SK-N-SH (cell line): ENCODE measurements at regions of chr21 and their contacts with region 1.

Region 1: DNA sequence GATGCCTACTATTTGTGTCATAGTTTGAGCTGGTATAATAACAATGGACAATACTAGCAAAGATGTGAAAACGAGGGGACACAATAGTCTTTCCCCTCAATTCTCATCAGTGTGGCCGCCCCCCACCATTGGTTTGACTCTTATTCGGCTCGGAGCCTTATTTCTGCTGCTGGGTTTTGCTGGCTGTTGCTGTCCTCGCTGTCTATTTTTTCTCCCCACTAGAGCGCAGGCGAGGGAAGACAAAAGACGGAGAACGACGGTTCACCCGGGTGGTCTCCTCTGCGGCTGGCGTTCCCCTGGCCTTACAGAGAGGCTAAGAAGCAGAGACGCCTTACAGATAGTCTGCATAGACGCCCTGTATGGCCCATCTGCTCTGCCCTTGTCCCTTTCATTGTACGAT is 19.4 kb downstream of the CLIC6 start:
- DNase-seq: peak; percentile 70
- H3K4me3 ChIP-seq: no peak overlapping the region
- H3K27ac ChIP-seq: no peak overlapping the region
- H3K4me1 ChIP-seq: no peaks in the 10 kb centered on the region; a peak in 1 of 4 replicates
- H3K27me3 ChIP-seq: peaks cover 38% of the 10 kb centered on the region; the same call in 1 of the 2 replicates
- CTCF ChIP-seq: peak; percentile 77
- EP300 ChIP-seq: no peak
- RAD21 ChIP-seq: peak; percentile 61

Region 2: GRCh38 chr21:33510826-33511225 is 1177.3 kb before region 1 on chr21:
- CTCF ChIA-PET with region 1: no interaction called
- POLR2A ChIA-PET with region 1: no interaction called
- DNase-seq: no peak
- H3K4me3 ChIP-seq: no peak overlapping the region
- H3K27ac ChIP-seq: no peak overlapping the region
- H3K4me1 ChIP-seq: no peaks in the 10 kb centered on the region
- H3K27me3 ChIP-seq: no peaks in the 10 kb centered on the region
- CTCF ChIP-seq: no peak
- EP300 ChIP-seq: no peak
- RAD21 ChIP-seq: no peak

Region 3: GRCh38 chr21:34669149-34669879 is 18.8 kb before region 1 on chr21:
- CTCF ChIA-PET with region 1: interaction called, 26 read pairs
- POLR2A ChIA-PET with region 1: no interaction called
- DNase-seq: peak; percentile 26
- H3K4me3 ChIP-seq: peak overlapping the region in 1 of 2 experiments; percentile 24; a peak in 2 of 4 replicates
- H3K27ac ChIP-seq: no peak overlapping the region
- H3K4me1 ChIP-seq: peaks cover 0 to 5% of the 10 kb centered on the region in 2 experiments; a peak in 1 of 4 replicates
- H3K27me3 ChIP-seq: peaks cover 80% of the 10 kb centered on the region
- CTCF ChIP-seq: no peak
- EP300 ChIP-seq: no peak
- RAD21 ChIP-seq: no peak

Region 4: GRCh38 chr21:34722684-34723300 is 34.6 kb after region 1 on chr21:
- CTCF ChIA-PET with region 1: interaction called, 11 read pairs
- POLR2A ChIA-PET with region 1: no interaction called
- DNase-seq: peak; percentile 35
- H3K4me3 ChIP-seq: no peak overlapping the region; a peak in 1 of 4 replicates
- H3K27ac ChIP-seq: no peak overlapping the region
- H3K4me1 ChIP-seq: no peaks in the 10 kb centered on the region
- H3K27me3 ChIP-seq: no peaks in the 10 kb centered on the region; the same call in 1 of the 2 replicates
- CTCF ChIP-seq: peak; percentile 56
- EP300 ChIP-seq: no peak
- RAD21 ChIP-seq: no peak

Region 5: DNA sequence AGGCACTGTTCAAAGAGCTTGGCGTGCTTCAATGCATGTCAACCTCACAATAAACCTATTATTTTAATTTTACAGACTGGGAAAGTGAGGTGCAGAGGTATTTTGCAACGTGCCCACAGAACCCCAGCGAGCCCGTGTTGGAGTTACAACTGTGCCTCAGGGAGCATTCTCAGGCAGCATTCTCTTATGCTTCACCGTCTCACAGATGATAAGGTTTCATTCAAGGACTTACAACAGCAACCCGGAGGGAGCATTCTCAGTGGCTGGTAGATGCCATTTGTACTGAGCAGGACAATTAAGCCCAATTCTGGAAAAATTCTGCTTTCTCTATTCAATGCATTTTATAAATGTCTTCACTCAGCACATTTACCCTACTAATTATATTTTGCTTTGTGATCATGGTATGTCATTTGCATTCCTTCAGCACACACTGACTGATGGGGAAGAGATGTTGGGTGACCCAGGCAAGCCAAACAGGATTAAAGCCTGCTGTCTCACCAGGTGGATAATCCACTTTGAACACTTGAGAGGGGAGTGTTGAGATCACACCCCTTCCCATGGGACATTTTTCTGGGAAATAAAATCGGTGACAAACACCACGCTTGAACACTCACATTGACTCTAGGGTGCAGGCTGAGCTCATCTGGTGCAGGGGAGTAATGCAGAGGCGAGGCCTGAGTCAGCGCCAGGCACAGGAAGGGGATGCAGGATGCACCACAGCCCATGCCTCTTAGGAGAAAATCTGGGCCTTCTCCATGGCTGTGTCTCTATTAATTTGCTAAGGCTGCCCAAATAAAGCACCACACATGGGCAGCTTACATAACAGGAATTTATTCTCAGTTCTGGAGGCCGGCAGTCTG is 94.6 kb after region 1 on chr21:
- CTCF ChIA-PET with region 1: interaction called, 10 read pairs
- POLR2A ChIA-PET with region 1: no interaction called
- DNase-seq: no peak
- H3K4me3 ChIP-seq: no peak overlapping the region
- H3K27ac ChIP-seq: no peak overlapping the region
- H3K4me1 ChIP-seq: peaks cover 0 to 2% of the 10 kb centered on the region in 2 experiments; a peak in 1 of 4 replicates
- H3K27me3 ChIP-seq: no peaks in the 10 kb centered on the region
- CTCF ChIP-seq: no peak
- EP300 ChIP-seq: no peak
- RAD21 ChIP-seq: no peak

Region 6: GRCh38 chr21:35940074-35940927 is 1252.2 kb after region 1 on chr21:
- CTCF ChIA-PET with region 1: interaction called, 14 read pairs
- POLR2A ChIA-PET with region 1: no interaction called
- DNase-seq: peak; percentile 34
- H3K4me3 ChIP-seq: no peak overlapping the region
- H3K27ac ChIP-seq: no peak overlapping the region
- H3K4me1 ChIP-seq: no peaks in the 10 kb centered on the region
- H3K27me3 ChIP-seq: peaks cover 5% of the 10 kb centered on the region; the same call in 1 of the 2 replicates
- CTCF ChIP-seq: peak; percentile 84
- EP300 ChIP-seq: no peak
- RAD21 ChIP-seq: peak; percentile 89

Region 7: GRCh38 chr21:36028127-36029069 is 1340.3 kb after region 1 on chr21:
- CTCF ChIA-PET with region 1: interaction called, 24 read pairs
- POLR2A ChIA-PET with region 1: no interaction called
- DNase-seq: peak; percentile 83
- H3K4me3 ChIP-seq: no peak overlapping the region; a peak in 1 of 4 replicates
- H3K27ac ChIP-seq: no peak overlapping the region
- H3K4me1 ChIP-seq: peaks cover 0 to 4% of the 10 kb centered on the region in 2 experiments; a peak in 1 of 4 replicates
- H3K27me3 ChIP-seq: no peaks in the 10 kb centered on the region
- CTCF ChIP-seq: peak; percentile 93
- EP300 ChIP-seq: no peak
- RAD21 ChIP-seq: peak; percentile 98